Activated CD4-positive, alpha-beta T cell treated with anti-CD3 and anti-CD28 coated beads, Interleukin-2, amount 10 ng/mL, durations not matched to agents 7 days and 5 days (primary cell): ENCODE measurements at regions of chr5 and their contacts with region 1.

Region 1: DNA sequence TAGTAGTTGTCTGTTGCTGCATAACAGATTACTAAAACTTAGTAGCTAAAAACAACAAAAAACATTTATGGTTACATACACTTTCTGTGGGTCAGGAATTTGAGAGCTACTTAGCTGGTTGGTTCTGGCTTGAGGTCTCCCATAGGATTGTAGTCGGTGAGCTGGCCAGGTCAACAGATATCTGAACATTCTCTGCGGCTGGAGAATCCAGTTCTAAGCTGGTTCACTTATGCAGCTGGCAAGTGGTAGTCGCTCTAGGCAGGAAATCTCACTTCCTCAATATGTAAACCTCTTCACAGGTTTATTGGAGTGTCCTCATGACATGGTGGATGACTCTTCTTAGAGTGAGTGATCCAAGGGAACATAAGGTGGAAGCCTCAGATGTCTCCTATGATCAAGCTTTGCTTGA is 65.7 kb upstream of the TNFAIP8 start:
- DNase-seq: no peak
- H3K4me3 Mint-ChIP-seq: peak overlapping the region; percentile 53
- H3K27ac Mint-ChIP-seq: peak overlapping the region; percentile 83
- H3K4me1 Mint-ChIP-seq: peaks cover 90% of the 10 kb centered on the region
- H3K27me3 Mint-ChIP-seq: no peaks in the 10 kb centered on the region

Region 2: GRCh38 chr5:118611332-118611945 is 678.7 kb before region 1 on chr5:
- CTCF ChIA-PET with region 1: no interaction called
- POLR2A ChIA-PET with region 1: no interaction called
- DNase-seq: no peak
- H3K4me3 Mint-ChIP-seq: no peak overlapping the region
- H3K27ac Mint-ChIP-seq: no peak overlapping the region
- H3K4me1 Mint-ChIP-seq: no peaks in the 10 kb centered on the region
- H3K27me3 Mint-ChIP-seq: no peaks in the 10 kb centered on the region

Region 3: DNA sequence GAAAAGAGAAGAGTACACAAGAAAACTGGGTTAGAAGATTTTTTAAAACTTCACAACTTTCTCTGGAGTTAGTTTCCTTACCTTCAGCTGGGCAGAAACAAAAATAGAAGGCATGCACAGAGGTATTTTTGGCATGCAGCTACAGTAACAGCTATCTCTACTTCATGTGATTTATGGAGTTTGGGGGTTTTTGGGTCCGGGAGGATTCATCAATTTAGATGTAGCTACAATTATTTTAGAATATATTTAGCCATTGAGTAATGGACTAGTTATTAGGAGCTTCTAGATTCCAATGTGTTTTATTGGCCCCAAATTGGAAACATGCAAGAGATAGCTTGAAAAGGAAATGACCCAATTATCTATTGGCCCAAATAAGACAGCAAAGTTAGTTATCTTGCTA is 26.0 kb before region 1 on chr5:
- CTCF ChIA-PET with region 1: no interaction called
- POLR2A ChIA-PET with region 1: no interaction called
- DNase-seq: no peak
- H3K4me3 Mint-ChIP-seq: no peak overlapping the region
- H3K27ac Mint-ChIP-seq: no peak overlapping the region
- H3K4me1 Mint-ChIP-seq: peaks cover 31% of the 10 kb centered on the region
- H3K27me3 Mint-ChIP-seq: no peaks in the 10 kb centered on the region

Region 4: DNA sequence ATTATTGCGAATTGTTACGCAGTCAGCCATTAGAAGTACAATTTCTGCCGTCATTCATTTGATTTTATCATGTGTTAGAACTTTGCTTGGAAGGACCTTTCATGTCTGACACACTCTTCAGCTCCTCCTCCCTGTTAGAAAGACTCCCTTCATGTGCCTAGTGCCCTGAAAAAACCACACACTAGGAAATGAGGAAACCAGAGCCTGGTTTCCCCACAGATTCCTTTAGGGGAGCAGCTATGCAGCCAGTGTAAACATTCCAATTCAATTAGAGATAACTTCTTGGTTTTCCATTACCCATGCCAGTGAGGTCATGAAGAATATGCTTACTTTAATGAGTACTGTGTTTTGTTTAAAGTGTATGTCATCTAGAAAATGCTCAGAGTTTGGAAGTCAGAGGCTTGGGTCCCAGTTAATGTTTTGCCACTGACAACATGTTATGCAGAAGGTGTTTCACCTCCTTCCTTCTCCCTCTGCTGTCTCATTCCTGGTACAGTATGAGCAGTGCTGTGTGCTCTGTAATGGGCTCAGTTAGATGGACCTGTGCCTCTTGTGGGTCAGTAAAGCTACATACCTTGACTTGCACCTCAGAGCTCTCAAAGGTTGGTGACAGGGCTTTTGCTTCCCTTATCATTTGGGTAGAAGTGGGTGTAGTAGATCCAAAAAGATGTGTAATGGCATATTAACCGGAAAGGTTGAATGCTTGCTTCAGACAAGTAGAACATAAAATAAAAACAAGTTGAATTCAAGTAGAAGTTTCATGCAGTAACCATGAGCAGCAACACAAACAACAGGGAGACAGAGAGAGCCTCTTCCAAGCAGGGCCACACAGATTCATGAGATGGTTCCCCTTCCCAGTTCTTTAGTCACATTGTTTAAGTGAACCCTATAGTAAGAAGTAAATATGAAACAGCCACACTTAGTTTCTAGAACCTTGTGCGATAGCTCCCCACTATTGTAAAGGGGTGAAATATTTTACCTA is 13.0 kb after region 1 on chr5:
- CTCF ChIA-PET with region 1: interaction called, 15 read pairs
- POLR2A ChIA-PET with region 1: no interaction called
- DNase-seq: no peak
- H3K4me3 Mint-ChIP-seq: peak overlapping the region; percentile 16
- H3K27ac Mint-ChIP-seq: peak overlapping the region; percentile 78
- H3K4me1 Mint-ChIP-seq: peaks cover 91% of the 10 kb centered on the region
- H3K27me3 Mint-ChIP-seq: no peaks in the 10 kb centered on the region

Region 5: GRCh38 chr5:119328753-119329602 is 38.8 kb after region 1 on chr5:
- CTCF ChIA-PET with region 1: interaction called, 11 read pairs
- POLR2A ChIA-PET with region 1: no interaction called
- DNase-seq: peak; percentile 59
- H3K4me3 Mint-ChIP-seq: peak overlapping the region; percentile 30
- H3K27ac Mint-ChIP-seq: peak overlapping the region; percentile 94
- H3K4me1 Mint-ChIP-seq: peaks cover 81% of the 10 kb centered on the region
- H3K27me3 Mint-ChIP-seq: no peaks in the 10 kb centered on the region